Prostate gland (tissue), 2 donors: ENCODE measurements at regions of chr11 and their contacts with region 1.

Region 1: DNA sequence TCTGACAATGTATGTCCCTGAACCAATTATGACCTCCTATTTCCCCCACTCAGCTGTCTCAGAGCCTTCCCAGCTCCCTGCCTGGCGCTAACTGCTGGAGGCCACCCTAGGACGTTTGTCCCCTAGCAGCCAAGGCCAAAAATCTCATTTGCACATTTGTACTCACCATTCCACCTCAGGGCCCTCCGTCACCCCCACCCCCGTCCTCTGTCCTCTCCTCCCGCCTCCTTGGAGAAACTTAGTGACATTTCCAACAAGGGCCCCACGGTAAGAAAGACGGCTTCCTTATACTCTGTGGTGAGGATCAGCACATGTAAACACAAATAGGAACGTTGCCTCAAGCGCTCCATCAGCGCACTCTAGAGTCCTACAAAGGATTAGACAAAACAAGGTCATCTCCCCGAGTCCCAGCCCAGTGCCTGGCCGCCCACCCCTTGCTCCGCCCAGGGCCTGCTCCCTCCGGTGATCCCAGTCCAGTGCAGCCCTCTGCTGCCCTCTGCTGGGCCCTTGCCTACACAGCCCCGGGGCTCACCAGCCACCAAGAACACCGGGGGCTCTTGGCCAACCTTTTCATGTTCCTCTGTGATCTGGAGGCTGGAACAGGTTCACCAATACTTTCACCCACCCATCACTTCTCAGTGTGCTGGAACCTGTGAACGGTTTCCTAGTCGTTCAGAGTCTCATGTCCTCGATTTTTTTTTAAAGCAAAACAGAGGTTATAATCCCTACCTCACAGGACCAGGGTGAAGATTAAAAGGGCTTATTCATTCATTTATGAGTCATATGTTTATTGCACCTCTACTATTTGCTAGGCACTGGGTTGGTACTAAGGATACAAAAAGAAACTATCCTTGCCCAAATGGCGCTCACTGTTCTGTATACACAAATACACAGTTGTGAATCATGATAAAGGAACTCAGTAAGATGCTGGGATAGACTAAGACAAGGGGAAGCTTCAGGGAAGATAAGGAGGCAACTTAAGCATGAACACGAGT is 15.3 kb upstream of the CTR9 start:
- DNase-seq: peak; percentile 85
- H3K4me3 ChIP-seq: peak overlapping the region in 1 of 2 donors; percentile 10
- H3K27ac ChIP-seq: peak overlapping the region; percentile 48 to 49
- H3K4me1 ChIP-seq: no peaks in the 10 kb centered on the region
- H3K27me3 ChIP-seq: no peaks in the 10 kb centered on the region
- CTCF ChIP-seq: peak; percentile 90 to 99 (median 96)
- POLR2A ChIP-seq: no peak

Region 2: DNA sequence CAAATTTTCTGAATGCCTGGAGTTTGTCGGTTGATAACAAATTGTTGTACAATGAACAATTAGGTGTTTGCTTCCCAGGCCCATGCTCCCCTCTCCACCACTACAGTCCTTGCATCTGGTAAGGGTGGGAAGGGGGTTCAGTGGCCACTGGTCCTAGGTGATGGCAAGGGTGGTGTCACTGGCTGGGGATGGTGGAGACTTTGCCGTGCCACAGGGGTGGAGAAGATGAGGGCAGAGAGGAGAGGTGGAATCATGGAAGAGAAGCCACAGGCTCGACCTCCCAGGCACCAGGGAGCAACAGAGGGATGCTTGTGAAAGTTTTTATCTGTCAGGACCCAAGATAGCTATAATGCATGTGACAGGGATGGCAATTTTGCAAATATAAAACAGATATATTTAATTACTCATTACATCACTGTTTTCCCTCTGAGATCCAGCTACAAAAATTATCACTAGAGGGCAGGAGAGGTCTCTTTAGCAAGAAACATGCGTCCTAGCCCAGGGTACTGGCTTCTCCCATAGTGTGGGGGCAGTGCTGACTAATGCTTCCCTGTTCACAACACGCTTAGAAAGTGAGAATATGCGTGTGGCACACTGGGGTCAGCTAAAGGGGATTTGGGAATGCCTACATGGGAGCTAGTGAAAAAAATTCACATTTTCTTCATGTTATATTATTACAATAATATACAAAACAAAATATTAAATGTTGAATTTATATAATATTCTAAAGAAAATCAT is 329.8 kb before region 1 on chr11:
- intact Hi-C with region 1: loop called (anchors 2 kb)
- DNase-seq: peak; percentile 65
- H3K4me3 ChIP-seq: no peak overlapping the region
- H3K27ac ChIP-seq: no peak overlapping the region
- H3K4me1 ChIP-seq: no peaks in the 10 kb centered on the region
- H3K27me3 ChIP-seq: no peaks in the 10 kb centered on the region
- CTCF ChIP-seq: peak in 3 of 4 experiments; percentile 61 to 79 (median 77)
- POLR2A ChIP-seq: no peak

Region 3: GRCh38 chr11:10514210-10514609 is 221.6 kb before region 1 on chr11:
- intact Hi-C with region 1: loop called (anchors 5 kb)
- DNase-seq: no peak
- H3K4me3 ChIP-seq: no peak overlapping the region
- H3K27ac ChIP-seq: no peak overlapping the region
- H3K4me1 ChIP-seq: no peaks in the 10 kb centered on the region
- H3K27me3 ChIP-seq: no peaks in the 10 kb centered on the region
- CTCF ChIP-seq: peak in 3 of 4 experiments; percentile 43 to 50 (median 49)
- POLR2A ChIP-seq: no peak

Region 4: GRCh38 chr11:10550503-10551289 is 185.1 kb before region 1 on chr11:
- intact Hi-C with region 1: no loop called
- DNase-seq: no peak
- H3K4me3 ChIP-seq: no peak overlapping the region
- H3K27ac ChIP-seq: no peak overlapping the region
- H3K4me1 ChIP-seq: no peaks in the 10 kb centered on the region
- H3K27me3 ChIP-seq: no peaks in the 10 kb centered on the region
- CTCF ChIP-seq: no peak
- POLR2A ChIP-seq: no peak

Region 5: GRCh38 chr11:10564696-10565318 is 171.0 kb before region 1 on chr11:
- intact Hi-C with region 1: loop called (anchors 5 kb)
- DNase-seq: no peak
- H3K4me3 ChIP-seq: no peak overlapping the region
- H3K27ac ChIP-seq: no peak overlapping the region
- H3K4me1 ChIP-seq: no peaks in the 10 kb centered on the region
- H3K27me3 ChIP-seq: no peaks in the 10 kb centered on the region
- CTCF ChIP-seq: peak in 3 of 4 experiments; percentile 14 to 45 (median 39)
- POLR2A ChIP-seq: no peak

Region 6: DNA sequence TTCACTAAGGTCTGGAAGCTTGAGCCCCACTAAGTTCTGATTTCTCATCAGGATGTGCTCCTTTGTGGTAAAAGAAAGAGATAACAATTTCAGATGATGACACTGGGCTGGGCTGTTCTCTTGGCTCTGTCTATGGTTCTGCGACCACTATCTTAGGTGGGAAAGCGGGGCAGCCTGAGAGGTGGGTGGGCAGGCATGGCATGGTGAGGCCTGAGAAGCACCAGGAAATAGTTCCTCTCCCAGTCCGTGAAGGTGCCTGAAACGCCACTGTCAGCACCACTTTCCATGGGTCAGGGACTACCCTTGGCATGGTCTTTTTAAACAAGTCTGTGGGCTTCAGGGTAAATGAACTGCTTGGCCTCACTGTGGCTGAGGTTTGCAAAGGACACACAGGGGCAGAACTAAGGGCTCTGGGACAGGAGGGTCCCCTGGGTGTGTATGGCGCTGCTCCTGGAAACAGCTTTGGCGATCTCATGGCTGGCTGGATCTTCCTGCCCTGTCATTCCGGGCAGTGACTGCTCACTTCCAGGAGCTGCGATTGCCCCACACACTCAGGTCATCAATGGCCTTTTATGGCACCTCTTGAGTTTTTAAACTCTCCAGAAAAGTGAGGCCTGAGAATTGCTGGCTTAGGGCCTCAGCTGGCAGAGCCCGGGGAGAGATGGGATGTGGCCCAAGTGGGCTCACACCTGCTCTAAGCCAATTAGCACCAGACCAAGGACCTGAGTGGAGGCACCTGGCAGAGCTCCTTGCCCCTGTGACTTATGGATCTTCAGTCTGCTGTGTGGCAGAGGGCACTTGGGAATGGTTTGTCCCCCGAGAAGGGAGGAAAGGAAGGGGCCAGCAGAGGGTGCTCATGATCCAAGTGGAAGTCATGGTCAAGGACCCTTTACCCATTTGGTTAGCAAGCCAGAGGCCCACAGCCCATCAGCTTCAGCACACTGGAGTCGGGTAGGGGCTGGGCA is 111.7 kb before region 1 on chr11:
- intact Hi-C with region 1: loop called (anchors 10 kb)
- DNase-seq: no peak
- H3K4me3 ChIP-seq: no peak overlapping the region
- H3K27ac ChIP-seq: peak overlapping the region; percentile 16 to 31
- H3K4me1 ChIP-seq: no peaks in the 10 kb centered on the region
- H3K27me3 ChIP-seq: no peaks in the 10 kb centered on the region
- CTCF ChIP-seq: peak in 3 of 4 experiments; percentile 36 to 53 (median 46)
- POLR2A ChIP-seq: no peak

Region 7: DNA sequence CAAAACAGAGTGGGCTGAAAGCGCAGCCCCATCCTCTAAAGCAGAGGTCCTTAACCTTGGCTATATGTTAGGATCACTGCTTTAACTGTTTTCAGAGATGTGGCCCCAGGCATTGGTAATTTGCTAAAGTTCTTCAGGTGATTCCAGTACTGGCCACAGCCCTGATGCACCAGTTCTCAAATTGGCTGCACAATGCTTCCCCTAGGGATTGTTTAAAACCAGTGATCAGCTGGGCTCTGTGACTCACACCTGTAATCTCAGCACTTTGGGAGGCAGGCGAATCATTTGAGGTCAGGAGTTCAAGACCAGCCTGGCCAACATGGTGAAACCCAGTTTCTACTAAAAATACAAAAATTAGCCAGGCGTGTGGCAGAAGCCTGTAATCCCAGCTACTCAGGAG is 33.8 kb before region 1 on chr11:
- intact Hi-C with region 1: no loop called
- DNase-seq: no peak
- H3K4me3 ChIP-seq: no peak overlapping the region
- H3K27ac ChIP-seq: no peak overlapping the region
- H3K4me1 ChIP-seq: no peaks in the 10 kb centered on the region
- H3K27me3 ChIP-seq: no peaks in the 10 kb centered on the region
- CTCF ChIP-seq: no peak
- POLR2A ChIP-seq: no peak